ENCODE measurements at regions of chr16 and their contacts with region 1.

Region 1: DNA sequence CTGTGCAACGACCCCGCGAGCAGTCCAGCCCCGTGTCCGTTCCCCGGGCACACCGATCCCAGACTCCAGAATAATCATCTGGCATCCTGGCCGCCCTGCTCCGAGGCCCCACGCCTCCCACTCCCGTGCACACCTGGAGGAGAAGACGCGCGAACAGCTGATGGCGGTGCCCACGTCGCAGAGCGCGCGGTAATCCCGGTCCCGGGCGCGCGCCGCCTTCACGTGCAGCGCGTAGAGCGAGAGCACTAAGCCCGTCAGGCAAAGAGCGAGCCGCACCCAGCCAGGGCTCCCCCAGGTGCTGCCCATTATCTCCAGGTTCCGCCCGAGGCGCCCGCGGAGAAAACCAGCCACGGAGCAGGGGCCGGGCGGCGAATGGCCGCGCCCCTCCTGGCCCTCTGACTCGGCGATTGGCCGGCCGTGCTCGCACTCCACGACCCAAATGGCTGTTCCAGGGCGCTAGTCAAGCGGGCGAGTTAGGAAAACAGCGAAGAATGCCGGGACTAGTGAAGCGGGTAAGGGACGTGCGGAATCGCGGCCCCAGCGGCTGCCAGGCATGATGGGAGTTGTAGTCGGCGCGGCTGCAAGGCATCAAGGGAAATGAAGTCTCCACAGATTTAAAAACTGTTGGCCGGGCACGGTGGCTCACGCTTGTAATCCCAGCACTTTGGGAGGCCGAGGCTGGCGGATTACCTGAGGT is at the start of gene VKORC1:
- DNase-seq: peak; percentile 97
- H3K4me3 ChIP-seq: peak within 1 kb of the TSS; percentile 73
- H3K27ac ChIP-seq: peak within 1 kb of the TSS; percentile 85
- H3K4me1 ChIP-seq: peaks cover 8% of the 10 kb centered on the region
- H3K27me3 ChIP-seq: no peaks in the 10 kb centered on the region
- CTCF ChIP-seq: no peak
- total RNA-seq, gene VKORC1: 39.5 to 50.3 TPM

Region 2: DNA sequence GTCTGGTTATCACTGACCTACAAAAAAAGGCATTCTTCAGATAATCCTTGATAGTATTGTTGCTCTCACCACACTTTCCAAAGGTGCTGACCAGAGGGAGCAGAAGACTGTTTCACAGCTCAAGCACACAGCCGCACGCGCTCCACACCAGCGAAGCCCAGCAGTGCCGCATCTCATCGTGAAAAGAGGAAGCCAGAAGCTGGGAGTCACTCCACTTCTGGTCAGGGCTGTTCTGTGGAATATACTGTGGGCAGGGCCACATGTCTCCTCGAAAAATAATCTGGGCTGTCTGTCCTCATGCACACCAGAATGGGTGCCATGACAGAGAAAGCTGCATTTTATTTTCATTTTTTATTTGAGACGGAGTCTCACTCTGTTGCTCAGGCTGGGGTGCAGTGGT is 62.6 kb after region 1 on chr16:
- intact Hi-C with region 1: loop called (anchors 10 kb)
- DNase-seq: peak; percentile 28
- H3K4me3 ChIP-seq: no peak overlapping the region
- H3K27ac ChIP-seq: no peak overlapping the region
- H3K4me1 ChIP-seq: no peaks in the 10 kb centered on the region
- H3K27me3 ChIP-seq: no peaks in the 10 kb centered on the region
- CTCF ChIP-seq: no peak

Measured in colonic mucosa (tissue), 4 donors.